Activated CD4-positive, alpha-beta T cell treated with anti-CD3 and anti-CD28 coated beads for 36 hours (primary cell): ENCODE measurements at regions of chr1 and their contacts with region 1.

Region 1: GRCh38 chr1:204128964-204129896 is 22.6 kb downstream of the ETNK2 start:
- DNase-seq: peak; percentile 82
- ATAC-seq: peak; percentile 88
- H3K4me3 Mint-ChIP-seq: no peak overlapping the region
- H3K27ac Mint-ChIP-seq: no peak overlapping the region
- H3K4me1 Mint-ChIP-seq: peaks cover 5% of the 10 kb centered on the region
- H3K27me3 Mint-ChIP-seq: no peaks in the 10 kb centered on the region

Region 2: GRCh38 chr1:203871107-203871875 is 257.9 kb before region 1 on chr1:
- CTCF ChIA-PET with region 1: interaction called, 25 read pairs
- POLR2A ChIA-PET with region 1: no interaction called
- intact Hi-C with region 1: loop called in 1 of 2 experiments (anchors 2 kb)
- DNase-seq: peak; percentile 33
- ATAC-seq: peak; percentile 47
- H3K4me3 Mint-ChIP-seq: no peak overlapping the region
- H3K27ac Mint-ChIP-seq: peak overlapping the region; percentile 13
- H3K4me1 Mint-ChIP-seq: no peaks in the 10 kb centered on the region
- H3K27me3 Mint-ChIP-seq: no peaks in the 10 kb centered on the region

Region 3: GRCh38 chr1:204115116-204115515 is 14.1 kb before region 1 on chr1:
- CTCF ChIA-PET with region 1: interaction called, 11 read pairs
- POLR2A ChIA-PET with region 1: interaction called, 12 read pairs
- intact Hi-C with region 1: no loop called
- DNase-seq: no peak
- ATAC-seq: no peak
- H3K4me3 Mint-ChIP-seq: no peak overlapping the region
- H3K27ac Mint-ChIP-seq: no peak overlapping the region
- H3K4me1 Mint-ChIP-seq: no peaks in the 10 kb centered on the region
- H3K27me3 Mint-ChIP-seq: no peaks in the 10 kb centered on the region

Region 4: DNA sequence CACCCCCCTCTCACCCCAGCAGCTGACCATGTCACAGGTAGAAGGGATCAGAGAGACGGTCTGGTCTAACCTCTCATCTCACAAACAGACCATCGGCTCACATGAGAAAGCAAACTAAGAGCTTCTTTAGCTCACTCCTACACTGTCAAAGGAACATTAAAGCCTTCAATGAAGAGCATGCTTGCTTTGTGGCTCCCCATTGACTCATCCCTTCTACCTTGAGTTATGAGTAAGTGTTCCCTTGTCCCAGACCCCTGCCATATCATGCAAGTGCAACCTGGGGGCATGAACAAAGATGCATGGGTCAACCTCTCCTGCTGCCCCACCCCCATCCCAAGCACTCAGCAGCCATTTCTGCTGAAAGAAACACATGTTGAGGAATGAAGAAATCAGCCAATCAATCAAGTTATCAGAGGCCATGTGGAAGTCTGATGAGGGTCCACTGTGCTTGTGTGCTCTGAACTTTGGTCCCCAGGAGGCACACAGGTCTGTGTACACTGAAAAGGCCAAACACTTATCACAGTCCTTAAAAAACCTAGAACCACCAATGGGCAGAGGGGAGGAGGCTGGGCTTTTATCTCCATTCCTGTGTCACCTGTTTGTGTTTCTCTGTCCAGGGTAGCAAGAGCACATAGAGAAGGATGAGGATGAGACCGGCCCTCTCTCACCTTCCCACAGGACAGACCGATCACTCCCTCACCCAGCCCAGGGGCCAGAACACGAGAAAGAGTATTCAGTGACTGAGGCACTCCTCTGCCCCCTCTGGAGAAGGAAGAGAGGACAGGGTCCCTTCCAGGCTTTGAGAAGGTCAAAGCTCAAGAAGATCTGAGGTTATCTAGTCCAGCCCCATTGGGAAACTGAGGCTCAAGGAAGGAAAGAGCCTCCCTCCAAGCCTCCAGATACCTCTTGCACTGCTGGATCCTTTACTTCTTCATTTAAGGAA is 13.1 kb after region 1 on chr1:
- CTCF ChIA-PET with region 1: interaction called, 12 read pairs
- POLR2A ChIA-PET with region 1: no interaction called
- intact Hi-C with region 1: no loop called
- DNase-seq: no peak
- ATAC-seq: peak; percentile 66
- H3K4me3 Mint-ChIP-seq: no peak overlapping the region
- H3K27ac Mint-ChIP-seq: no peak overlapping the region
- H3K4me1 Mint-ChIP-seq: no peaks in the 10 kb centered on the region
- H3K27me3 Mint-ChIP-seq: no peaks in the 10 kb centered on the region

Region 5: GRCh38 chr1:204241050-204241449 is 111.8 kb after region 1 on chr1:
- CTCF ChIA-PET with region 1: no interaction called
- POLR2A ChIA-PET with region 1: no interaction called
- intact Hi-C with region 1: no loop called
- DNase-seq: no peak
- ATAC-seq: no peak
- H3K4me3 Mint-ChIP-seq: no peak overlapping the region
- H3K27ac Mint-ChIP-seq: no peak overlapping the region
- H3K4me1 Mint-ChIP-seq: no peaks in the 10 kb centered on the region
- H3K27me3 Mint-ChIP-seq: peaks cover 4% of the 10 kb centered on the region